ENCODE measurements at regions of chr3 and their contacts with region 1.

Region 1: GRCh38 chr3:66407611-66408218 is 93.1 kb downstream of the LRIG1 start:
- DNase-seq: peak; percentile 88
- CTCF ChIP-seq: peak; percentile 95

Region 2: GRCh38 chr3:66253790-66254620 is 153.7 kb before region 1 on chr3:
- CTCF ChIA-PET with region 1: interaction called, 24 read pairs
- POLR2A ChIA-PET with region 1: no interaction called
- DNase-seq: peak; percentile 37
- CTCF ChIP-seq: peak; percentile 51

Region 3: DNA sequence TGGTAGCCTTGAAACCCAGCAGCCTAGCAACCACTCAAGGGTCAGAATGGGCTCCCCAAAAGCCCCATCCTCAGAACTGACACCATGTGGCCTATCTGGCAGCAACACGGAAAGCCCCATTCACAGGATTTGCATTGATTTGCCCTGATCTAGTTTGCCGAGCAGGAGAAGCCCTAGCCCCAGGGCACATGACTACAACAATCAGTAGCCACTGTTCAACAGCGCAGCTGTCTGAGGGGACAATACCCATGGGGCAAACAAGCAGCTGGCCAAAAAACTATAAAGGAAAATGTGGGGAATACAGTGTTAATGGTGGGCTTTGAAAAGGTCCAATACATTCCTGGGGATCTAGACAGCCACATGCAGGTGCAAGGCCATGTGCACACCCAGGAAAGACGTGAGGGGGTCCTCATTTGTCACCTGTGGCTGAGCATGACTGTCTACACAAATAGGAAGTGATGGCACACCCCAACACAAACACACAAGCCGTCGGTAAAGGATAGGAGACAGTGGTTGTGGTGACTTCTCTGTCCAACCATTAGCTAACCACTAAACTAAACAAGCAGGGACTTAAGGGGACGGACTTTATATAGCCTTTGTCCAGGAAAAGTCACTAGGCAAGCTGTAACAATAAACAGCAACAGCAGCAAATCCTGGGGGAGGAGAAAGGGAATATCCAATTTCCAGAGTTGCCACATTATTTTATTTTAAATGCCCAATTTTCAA is 20.6 kb before region 1 on chr3:
- CTCF ChIA-PET with region 1: interaction called, 108 read pairs
- POLR2A ChIA-PET with region 1: no interaction called
- DNase-seq: peak; percentile 61
- CTCF ChIP-seq: no peak

Region 4: GRCh38 chr3:66418475-66418931 is 10.8 kb after region 1 on chr3:
- CTCF ChIA-PET with region 1: interaction called, 27 read pairs
- POLR2A ChIA-PET with region 1: no interaction called
- DNase-seq: no peak
- CTCF ChIP-seq: no peak

Region 5: GRCh38 chr3:66444146-66444644 is 36.5 kb after region 1 on chr3:
- CTCF ChIA-PET with region 1: interaction called, 14 read pairs
- POLR2A ChIA-PET with region 1: no interaction called
- DNase-seq: no peak
- CTCF ChIP-seq: no peak

Region 6: GRCh38 chr3:66472313-66473134 is 64.8 kb after region 1 on chr3:
- CTCF ChIA-PET with region 1: interaction called, 25 read pairs
- POLR2A ChIA-PET with region 1: no interaction called
- DNase-seq: peak; percentile 53
- CTCF ChIP-seq: no peak

Region 7: GRCh38 chr3:66609659-66610561 is 202.2 kb after region 1 on chr3:
- CTCF ChIA-PET with region 1: no interaction called
- POLR2A ChIA-PET with region 1: no interaction called
- DNase-seq: no peak
- CTCF ChIP-seq: no peak

Region 8: DNA sequence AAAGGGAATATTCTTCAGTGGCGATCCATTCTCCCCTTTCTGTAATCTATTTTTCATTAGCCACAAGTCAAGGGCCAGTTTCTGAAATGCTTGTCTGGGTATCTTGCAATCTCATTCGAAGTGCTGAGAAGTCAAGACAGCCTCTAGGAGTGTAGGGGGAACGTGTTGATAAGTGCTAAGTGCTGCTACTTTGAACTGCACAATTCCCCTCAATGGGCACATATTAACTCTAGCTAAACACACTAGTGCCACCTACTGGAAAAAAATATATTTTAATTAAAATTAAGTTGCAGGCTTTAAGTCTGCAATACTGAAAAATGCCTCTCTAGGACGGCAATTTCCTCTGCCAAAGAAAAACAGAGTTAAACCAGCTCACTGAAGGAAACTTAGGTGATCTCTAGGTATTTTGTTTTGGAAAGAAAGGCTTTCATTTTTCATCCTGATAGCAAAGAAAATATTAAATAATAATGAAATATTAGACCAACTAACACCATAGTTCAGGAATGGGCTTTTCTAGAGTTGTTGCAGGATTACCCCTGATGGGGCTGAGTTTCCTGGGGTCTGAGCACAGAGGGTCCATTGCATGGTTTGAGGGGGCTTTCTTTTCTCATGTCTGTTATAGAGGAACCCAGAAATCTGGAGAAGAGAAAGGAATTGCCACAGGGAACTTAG is 408.5 kb after region 1 on chr3:
- CTCF ChIA-PET with region 1: interaction called, 176 read pairs
- POLR2A ChIA-PET with region 1: no interaction called
- DNase-seq: peak; percentile 44
- CTCF ChIP-seq: peak; percentile 8